Transverse colon (tissue), 4 donors: ENCODE measurements at regions of chr2 and their contacts with region 1.

Region 1: GRCh38 chr2:17851731-17852585 is 26.5 kb upstream of the KCNS3 start:
- DNase-seq: peak; percentile 47
- H3K4me3 ChIP-seq: no peak overlapping the region
- H3K27ac ChIP-seq: no peak overlapping the region
- H3K4me1 ChIP-seq: no peaks in the 10 kb centered on the region
- H3K27me3 ChIP-seq: no peaks in the 10 kb centered on the region
- CTCF ChIP-seq: peak; percentile 86 to 88 (median 86)
- EP300 ChIP-seq: no peak
- POLR2A ChIP-seq: no peak

Region 2: GRCh38 chr2:17680119-17680518 is 171.8 kb before region 1 on chr2:
- in situ Hi-C with region 1: no loop called
- intact Hi-C with region 1: no loop called
- DNase-seq: no peak
- H3K4me3 ChIP-seq: no peak overlapping the region
- H3K27ac ChIP-seq: no peak overlapping the region
- H3K4me1 ChIP-seq: no peaks in the 10 kb centered on the region
- H3K27me3 ChIP-seq: no peaks in the 10 kb centered on the region
- CTCF ChIP-seq: no peak
- EP300 ChIP-seq: no peak
- POLR2A ChIP-seq: no peak

Region 3: DNA sequence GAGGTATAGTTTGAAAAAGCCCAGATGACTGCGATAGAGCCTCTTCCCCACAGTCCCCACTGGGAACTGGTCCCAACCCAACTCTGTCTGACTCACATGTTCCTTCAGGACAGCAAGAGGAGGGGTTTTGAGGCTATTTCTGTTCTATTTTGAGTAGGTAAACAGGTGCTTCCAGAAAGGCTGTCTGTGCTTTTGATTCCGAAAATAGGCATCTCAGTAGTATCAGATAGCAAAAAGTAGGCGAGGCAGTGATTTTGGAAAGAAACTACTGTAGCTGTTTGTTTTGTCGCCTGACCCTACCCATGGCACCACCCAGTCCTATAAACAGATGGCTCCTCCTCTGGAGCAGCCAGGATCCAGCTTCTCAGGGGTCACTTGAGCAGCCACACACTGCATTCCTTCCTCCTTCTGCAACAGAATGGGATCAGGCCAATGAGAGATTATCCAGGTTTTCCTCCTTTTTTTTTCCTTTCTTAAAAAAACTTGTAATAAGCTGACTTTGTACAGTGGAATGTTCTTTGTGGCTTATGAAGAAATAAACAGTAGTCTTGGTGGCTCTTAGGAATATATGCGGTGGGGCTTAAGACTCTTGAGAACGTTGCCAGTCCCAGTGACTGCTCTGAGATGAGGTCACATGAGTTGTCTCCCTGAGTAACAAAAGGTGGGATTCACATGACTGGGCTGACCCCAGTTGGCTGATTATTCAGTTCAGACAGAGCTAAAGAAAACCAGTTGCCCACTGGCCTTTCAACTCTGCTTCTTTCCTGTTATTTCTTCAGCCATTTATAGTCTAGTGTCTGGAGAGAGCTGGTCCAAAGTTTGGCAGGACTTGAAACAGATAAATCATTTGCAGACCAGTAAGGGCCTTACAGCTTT is 125.2 kb after region 1 on chr2:
- in situ Hi-C with region 1: no loop called
- intact Hi-C with region 1: no loop called
- DNase-seq: peak; percentile 18
- H3K4me3 ChIP-seq: no peak overlapping the region
- H3K27ac ChIP-seq: peak overlapping the region; percentile 52 to 77 (median 71)
- H3K4me1 ChIP-seq: peaks cover 5 to 9% (median 7%) of the 10 kb centered on the region in 4 donors
- H3K27me3 ChIP-seq: no peaks in the 10 kb centered on the region
- CTCF ChIP-seq: no peak
- EP300 ChIP-seq: no peak
- POLR2A ChIP-seq: no peak

Region 4: GRCh38 chr2:18149645-18150246 is 297.8 kb after region 1 on chr2:
- in situ Hi-C with region 1: loop called in 2 of 4 experiments (anchors 10 to 25 kb)
- intact Hi-C with region 1: loop called (anchors 5 kb)
- DNase-seq: no peak
- H3K4me3 ChIP-seq: no peak overlapping the region
- H3K27ac ChIP-seq: no peak overlapping the region
- H3K4me1 ChIP-seq: no peaks in the 10 kb centered on the region
- H3K27me3 ChIP-seq: no peaks in the 10 kb centered on the region
- CTCF ChIP-seq: peak; percentile 51 to 78 (median 68)
- EP300 ChIP-seq: no peak
- POLR2A ChIP-seq: no peak

Region 5: GRCh38 chr2:18178736-18179349 is 326.9 kb after region 1 on chr2:
- in situ Hi-C with region 1: loop called in 3 of 4 experiments (anchors 10 to 25 kb)
- intact Hi-C with region 1: no loop called
- DNase-seq: peak; percentile 13
- H3K4me3 ChIP-seq: no peak overlapping the region
- H3K27ac ChIP-seq: no peak overlapping the region
- H3K4me1 ChIP-seq: no peaks in the 10 kb centered on the region
- H3K27me3 ChIP-seq: no peaks in the 10 kb centered on the region
- CTCF ChIP-seq: peak; percentile 63 to 88 (median 77)
- EP300 ChIP-seq: no peak
- POLR2A ChIP-seq: no peak

Region 6: DNA sequence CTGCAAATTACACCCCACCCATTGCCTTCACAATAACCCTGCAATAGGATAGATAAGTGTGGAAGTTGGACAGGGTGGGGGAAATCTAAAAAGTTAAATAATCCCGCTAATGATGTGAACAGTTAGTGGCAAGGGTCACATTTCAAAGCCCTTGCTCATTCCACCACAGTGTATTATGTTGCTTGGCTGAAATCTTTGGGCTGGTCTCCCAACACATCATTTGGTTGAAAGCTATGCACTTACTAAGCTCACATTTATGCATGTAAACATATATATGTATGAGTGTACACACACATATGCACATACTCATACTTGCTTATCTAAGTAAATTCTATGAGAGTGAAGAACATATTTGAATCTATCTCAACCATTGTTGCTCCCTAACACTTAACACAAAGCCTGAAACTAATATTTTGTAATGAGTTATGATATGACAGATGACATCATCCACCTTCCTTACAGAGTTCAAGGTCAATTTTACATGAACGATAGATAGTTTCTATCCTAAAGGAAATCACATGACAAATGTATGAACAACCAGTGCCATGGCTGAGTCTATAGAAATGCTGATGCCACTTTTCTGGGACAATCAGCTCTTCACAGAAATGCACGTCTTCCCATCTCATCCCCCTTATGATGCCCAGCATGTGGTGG is 510.9 kb after region 1 on chr2:
- in situ Hi-C with region 1: loop called in 2 of 4 experiments (anchors 25 kb)
- intact Hi-C with region 1: no loop called
- DNase-seq: no peak
- H3K4me3 ChIP-seq: no peak overlapping the region
- H3K27ac ChIP-seq: no peak overlapping the region
- H3K4me1 ChIP-seq: no peaks in the 10 kb centered on the region
- H3K27me3 ChIP-seq: no peaks in the 10 kb centered on the region
- CTCF ChIP-seq: no peak
- EP300 ChIP-seq: no peak
- POLR2A ChIP-seq: no peak